Right ventricle myocardium inferior (tissue), 1 donor: ENCODE measurements at regions of chr1 and their contacts with region 1.

Region 1: DNA sequence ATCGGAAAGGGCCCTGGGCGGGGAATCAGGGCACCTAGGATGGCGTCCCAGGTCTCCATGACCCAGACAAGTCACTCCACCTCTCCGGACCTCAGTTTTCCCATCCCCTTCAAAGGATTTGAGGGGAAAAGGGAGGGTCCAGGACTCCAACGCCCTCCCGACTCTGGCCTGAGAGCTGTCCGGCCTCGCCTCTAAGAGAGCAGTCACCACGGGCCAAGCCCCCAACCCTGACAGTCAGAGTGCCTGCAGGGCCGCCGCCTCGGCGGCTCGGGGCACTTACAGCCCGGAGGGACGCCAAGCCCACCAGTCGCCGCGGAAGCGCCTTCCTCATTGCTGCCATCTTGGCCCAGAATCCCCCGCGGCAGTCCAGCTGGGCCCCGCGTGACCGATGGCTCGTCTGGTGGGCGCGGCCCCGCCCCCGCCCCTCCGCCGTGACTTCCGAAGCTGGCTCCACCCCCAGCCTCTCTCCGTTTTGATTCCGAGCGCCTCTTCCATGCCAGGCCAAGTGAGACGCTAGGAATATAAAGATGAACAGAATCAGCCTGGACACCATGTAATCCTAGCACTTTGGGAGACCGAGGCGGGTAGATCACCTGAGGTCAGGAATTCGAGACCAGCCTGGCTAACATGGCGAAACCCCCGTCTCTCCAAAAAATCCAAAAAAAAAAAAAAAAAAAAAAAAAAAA is at the start of gene HMGCL:
- DNase-seq: peak; percentile 95
- ATAC-seq: peak; percentile 98
- total RNA-seq, gene HMGCL: 32.8 TPM

Region 2: GRCh38 chr1:23521588-23521987 is 303.6 kb before region 1 on chr1:
- intact Hi-C with region 1: no loop called
- DNase-seq: no peak
- ATAC-seq: no peak

Region 3: GRCh38 chr1:23732363-23733224 is 92.6 kb before region 1 on chr1:
- intact Hi-C with region 1: no loop called
- DNase-seq: no peak
- ATAC-seq: no peak

Region 4: GRCh38 chr1:23800400-23801337 is 24.6 kb before region 1 on chr1 and contains the start of gene GALE:
- intact Hi-C with region 1: loop called (anchors 2 kb)
- DNase-seq: peak; percentile 98
- ATAC-seq: peak; percentile 96
- total RNA-seq, gene GALE: 7.8 TPM